ENCODE measurements at regions of chr5 and their contacts with region 1.

Region 1: DNA sequence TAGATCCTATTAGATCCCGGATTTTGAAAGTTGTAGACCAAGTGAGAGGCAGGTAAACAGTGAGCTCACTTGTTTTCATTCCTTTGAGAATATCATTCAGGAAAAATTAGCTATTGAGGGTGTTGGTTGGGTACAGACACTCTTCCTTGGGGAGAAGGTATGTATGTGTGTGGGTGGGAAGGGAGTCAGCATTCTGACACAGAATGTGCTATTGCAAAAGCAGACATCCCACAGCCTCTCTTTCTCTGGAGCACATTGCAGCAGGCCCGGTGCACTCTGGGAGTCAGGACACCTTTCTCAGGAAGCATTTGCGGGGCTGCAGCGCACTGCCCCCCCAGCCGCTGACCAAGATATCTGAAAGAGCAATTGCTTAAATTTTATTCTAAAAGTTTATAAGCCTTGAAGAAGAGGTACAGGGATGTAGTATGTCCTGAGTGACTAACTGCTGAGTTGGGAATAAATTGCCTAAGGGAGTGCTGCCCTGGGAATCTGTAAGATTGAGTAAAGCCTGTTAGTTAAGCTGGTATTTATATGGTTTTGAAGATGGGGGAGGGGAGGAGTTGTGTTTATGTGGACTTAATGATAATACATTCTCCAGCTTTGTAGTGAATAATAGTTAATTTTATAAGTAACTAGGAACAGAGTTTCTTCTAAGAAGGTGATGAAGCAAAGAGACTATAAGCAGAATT is 5.2 kb downstream of the TNFAIP8 start:
- DNase-seq: peak; percentile 22
- H3K4me3 Mint-ChIP-seq: no peak overlapping the region
- H3K27ac Mint-ChIP-seq: peak overlapping the region; percentile 29
- H3K4me1 Mint-ChIP-seq: peaks cover 76% of the 10 kb centered on the region
- H3K27me3 Mint-ChIP-seq: no peaks in the 10 kb centered on the region
- CTCF ChIP-seq: no peak

Region 2: DNA sequence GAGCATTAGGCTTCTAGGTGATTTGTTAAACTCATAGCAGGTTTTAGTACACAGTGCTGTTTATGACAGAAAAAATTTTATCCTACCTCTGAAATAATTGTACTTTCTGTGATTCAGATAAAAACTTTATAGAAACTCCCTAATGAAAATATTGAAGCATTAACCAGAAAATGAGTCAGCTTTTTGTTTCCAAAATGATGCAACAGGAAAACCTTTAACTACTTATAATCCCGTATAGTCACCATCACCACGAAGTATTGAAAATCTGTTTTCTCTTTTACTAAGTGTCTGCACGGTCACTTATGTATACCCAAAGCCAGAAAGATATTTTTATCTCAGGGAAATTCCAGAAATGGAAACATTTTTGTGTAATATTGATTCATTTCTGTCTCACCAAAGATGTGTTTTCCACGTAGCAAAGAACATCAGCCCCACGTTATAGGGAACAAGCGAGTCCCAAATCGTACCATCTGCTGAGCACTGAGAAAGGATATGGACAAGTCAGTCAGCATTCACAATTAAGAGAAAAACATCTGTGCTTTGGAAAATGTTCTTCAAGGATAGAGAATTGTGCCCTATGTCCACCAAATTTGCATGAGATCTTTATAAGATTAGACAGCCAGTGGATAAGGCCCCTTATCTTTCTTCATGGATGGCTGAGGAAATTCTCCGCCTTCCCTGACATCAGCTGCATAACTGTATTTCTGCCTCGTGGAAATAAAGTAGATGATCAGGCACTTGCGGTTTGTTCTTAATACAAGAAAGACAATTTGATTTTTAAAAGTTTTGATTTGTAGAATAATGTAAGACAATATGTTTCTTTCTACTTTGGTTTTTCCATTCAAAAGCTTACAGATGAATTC is 36.7 kb after region 1 on chr5:
- CTCF ChIA-PET with region 1: no interaction called
- intact Hi-C with region 1: loop called (anchors 2 kb)
- DNase-seq: no peak
- H3K4me3 Mint-ChIP-seq: peak overlapping the region; percentile 17
- H3K27ac Mint-ChIP-seq: peak overlapping the region; percentile 78
- H3K4me1 Mint-ChIP-seq: peaks cover 35% of the 10 kb centered on the region
- H3K27me3 Mint-ChIP-seq: no peaks in the 10 kb centered on the region
- CTCF ChIP-seq: no peak

Measured in Calu3 (cell line).